AG04450 (cell line): ENCODE measurements at regions of chr20 and their contacts with region 1.

Region 1: DNA sequence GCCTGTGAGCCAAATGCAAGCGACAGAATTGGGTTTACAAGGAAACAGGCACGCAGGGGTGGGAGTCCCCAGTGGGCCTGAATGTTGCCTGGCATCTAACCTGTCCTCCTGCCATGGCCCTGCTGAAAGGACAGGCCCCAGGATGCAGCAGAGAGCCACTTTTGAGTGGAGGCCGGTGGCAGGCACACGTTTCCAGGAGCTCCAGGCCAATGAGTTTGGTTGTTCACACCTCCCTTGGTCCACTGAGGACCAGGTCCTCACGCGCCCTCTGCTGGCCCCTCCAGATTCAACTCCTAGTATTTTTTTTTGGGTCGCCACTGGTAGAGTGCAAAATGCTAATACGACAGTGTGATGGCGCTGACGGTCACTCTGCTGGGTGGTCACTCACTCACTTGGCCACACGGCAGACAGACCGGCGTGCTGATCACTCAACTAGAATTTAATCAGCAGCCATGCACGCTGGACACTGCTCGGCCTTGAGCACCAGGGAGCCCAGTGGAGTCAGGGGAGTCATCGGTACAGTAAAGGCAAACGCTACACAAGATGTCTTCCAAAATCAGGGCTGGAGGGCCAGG is 81.7 kb upstream of the NFATC2 start:
- DNase-seq: no peak
- H3K4me3 ChIP-seq: no peak overlapping the region
- H3K27ac ChIP-seq: peak overlapping the region; percentile 31
- H3K27me3 ChIP-seq: no peaks in the 10 kb centered on the region
- CTCF ChIP-seq: peak; percentile 71

Region 2: DNA sequence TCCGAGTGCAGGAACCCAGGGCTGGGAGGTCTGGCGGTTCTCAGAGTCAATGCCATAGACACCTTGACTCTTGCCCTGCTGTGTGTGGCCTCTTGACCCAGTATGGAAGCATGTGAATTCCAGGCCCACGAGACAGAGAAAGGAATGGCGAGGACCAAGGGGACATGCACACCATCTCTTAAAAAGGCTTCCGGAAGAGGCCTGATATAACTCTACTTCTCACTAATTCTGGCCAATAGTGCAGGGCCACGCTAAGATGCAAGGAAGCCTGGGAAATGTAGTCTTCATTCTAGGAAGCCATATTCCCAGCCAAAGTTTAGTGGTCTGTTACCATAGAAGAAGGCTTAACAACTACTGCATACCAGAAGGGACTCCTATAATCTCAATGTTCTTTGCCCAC is 424.3 kb before region 1 on chr20:
- CTCF ChIA-PET with region 1: no interaction called
- POLR2A ChIA-PET with region 1: no interaction called
- DNase-seq: no peak
- H3K4me3 ChIP-seq: no peak overlapping the region
- H3K27ac ChIP-seq: no peak overlapping the region
- H3K27me3 ChIP-seq: peaks cover 4% of the 10 kb centered on the region
- CTCF ChIP-seq: no peak

Region 3: GRCh38 chr20:51513324-51513944 is 110.8 kb before region 1 on chr20:
- CTCF ChIA-PET with region 1: no interaction called
- POLR2A ChIA-PET with region 1: no interaction called
- DNase-seq: no peak
- H3K4me3 ChIP-seq: no peak overlapping the region
- H3K27ac ChIP-seq: no peak overlapping the region
- H3K27me3 ChIP-seq: no peaks in the 10 kb centered on the region
- CTCF ChIP-seq: no peak

Region 4: GRCh38 chr20:51679254-51679921 is 55.1 kb after region 1 on chr20:
- CTCF ChIA-PET with region 1: no interaction called
- POLR2A ChIA-PET with region 1: interaction called, 14 read pairs
- DNase-seq: no peak
- H3K4me3 ChIP-seq: no peak overlapping the region
- H3K27ac ChIP-seq: no peak overlapping the region
- H3K27me3 ChIP-seq: no peaks in the 10 kb centered on the region
- CTCF ChIP-seq: no peak